Thyroid gland (tissue), 4 donors: ENCODE measurements at regions of chr15 and their contacts with region 1.

Region 1: DNA sequence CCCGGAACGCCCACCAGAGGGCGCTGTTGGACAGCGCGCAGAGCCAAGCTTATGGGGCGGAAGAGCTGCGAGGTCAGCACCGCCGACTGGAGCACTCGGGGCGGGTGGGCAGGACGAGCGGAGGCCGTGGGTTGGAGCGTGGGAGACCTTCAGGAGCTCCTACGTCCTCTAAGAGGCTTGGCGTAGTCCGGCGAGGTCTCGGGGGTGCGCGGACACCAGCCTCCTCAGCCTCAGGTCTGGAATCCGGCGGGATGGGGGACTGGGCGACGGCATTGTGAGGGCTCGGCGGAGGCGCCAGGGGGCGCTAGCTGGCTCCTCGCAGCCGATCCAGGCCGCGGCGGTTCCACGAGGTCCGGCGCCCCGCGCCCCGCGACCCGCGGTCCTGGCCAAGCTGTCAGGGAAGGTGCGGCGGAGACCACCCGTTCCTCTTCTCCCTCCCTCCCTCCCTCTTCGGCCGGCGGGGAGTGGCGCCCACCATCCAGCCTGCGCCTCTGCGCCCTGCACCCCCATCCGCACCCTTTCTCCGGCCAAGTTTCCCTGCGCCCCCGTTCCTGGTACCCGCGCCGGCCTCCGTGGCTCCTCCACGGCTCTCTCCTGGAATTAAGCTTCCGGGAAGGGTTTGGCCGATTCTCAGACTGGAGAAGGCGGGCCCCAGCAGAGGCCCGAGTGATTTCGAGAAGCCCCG is 24.3 kb upstream of the POLG start:
- DNase-seq: peak; percentile 58 to 69
- H3K4me3 ChIP-seq: peak overlapping the region in 1 of 3 donors; percentile 37
- H3K27ac ChIP-seq: no peak overlapping the region
- H3K4me1 ChIP-seq: peaks cover 7 to 16% of the 10 kb centered on the region in 2 donors
- H3K27me3 ChIP-seq: peaks cover 23% of the 10 kb centered on the region
- CTCF ChIP-seq: peak; percentile 92 to 99 (median 96)
- POLR2A ChIP-seq: no peak

Region 2: GRCh38 chr15:89087830-89088604 is 270.9 kb before region 1 on chr15 and contains the start of gene ABHD2:
- intact Hi-C with region 1: no loop called
- DNase-seq: peak; percentile 99
- H3K4me3 ChIP-seq: peak within 1 kb of the TSS; percentile 52 to 82 (median 78)
- H3K27ac ChIP-seq: peak within 1 kb of the TSS; percentile 23 to 86 (median 79)
- H3K4me1 ChIP-seq: peaks cover 16 to 22% of the 10 kb centered on the region in 2 donors
- H3K27me3 ChIP-seq: no peaks in the 10 kb centered on the region
- CTCF ChIP-seq: no peak
- POLR2A ChIP-seq: peak in 1 of 2 donors; percentile 76
- total RNA-seq, gene ABHD2: 52.0 to 74.4 (median 66.2) TPM

Region 3: DNA sequence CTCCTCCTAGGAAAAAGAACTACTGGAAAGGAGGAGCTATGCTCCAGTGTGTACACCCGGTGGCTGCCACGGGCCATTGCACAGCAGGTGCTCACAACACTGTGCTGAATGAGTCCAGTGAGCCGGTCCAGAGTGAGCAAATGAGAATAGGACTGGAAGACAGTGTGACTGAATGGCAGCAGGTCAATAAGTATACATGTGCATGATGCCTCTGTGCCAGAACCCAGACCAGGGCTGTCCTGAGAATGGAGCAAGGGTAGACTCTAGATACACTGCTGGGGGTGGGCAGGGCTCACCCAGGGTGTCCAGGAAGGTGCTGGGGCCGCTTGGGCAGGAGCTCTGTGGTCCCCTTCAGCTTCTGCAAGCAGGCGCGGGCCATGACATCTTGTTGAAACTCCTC is 32.6 kb before region 1 on chr15:
- intact Hi-C with region 1: loop called (anchors 2 kb)
- DNase-seq: peak; percentile 53 to 68
- H3K4me3 ChIP-seq: no peak overlapping the region
- H3K27ac ChIP-seq: no peak overlapping the region
- H3K4me1 ChIP-seq: peaks cover under 1 to 7% of the 10 kb centered on the region in 2 donors
- H3K27me3 ChIP-seq: no peaks in the 10 kb centered on the region
- CTCF ChIP-seq: no peak
- POLR2A ChIP-seq: no peak

Region 4: GRCh38 chr15:89416141-89416853 is 57.4 kb after region 1 on chr15:
- intact Hi-C with region 1: loop called (anchors 5 kb)
- DNase-seq: peak; percentile 34 to 35
- H3K4me3 ChIP-seq: no peak overlapping the region
- H3K27ac ChIP-seq: no peak overlapping the region
- H3K4me1 ChIP-seq: peaks cover 0 to 4% of the 10 kb centered on the region in 2 donors
- H3K27me3 ChIP-seq: peaks cover 7% of the 10 kb centered on the region
- CTCF ChIP-seq: peak in 5 of 6 experiments; percentile 22 to 61 (median 44)
- POLR2A ChIP-seq: no peak

Region 5: DNA sequence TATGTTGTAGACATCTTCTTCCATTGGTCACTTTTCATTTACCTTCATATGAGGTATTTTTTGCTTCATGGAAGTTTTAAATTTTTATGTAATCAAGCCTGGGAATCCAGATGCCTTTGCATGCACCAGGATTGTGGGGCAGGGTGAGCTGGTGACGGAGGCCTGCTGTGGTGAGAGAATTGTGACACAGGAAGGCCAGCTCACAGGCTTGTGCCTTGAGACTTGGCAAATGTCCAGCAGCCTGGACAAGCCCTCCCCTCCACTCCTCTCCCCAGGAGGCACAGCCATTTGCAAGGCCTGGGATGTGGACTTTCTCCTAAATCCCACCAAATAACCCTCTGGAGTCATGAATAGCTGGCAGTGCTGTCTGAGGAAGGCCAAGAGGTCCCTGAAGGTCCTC is 70.1 kb after region 1 on chr15:
- intact Hi-C with region 1: loop called (anchors 2 kb)
- DNase-seq: no peak
- H3K4me3 ChIP-seq: no peak overlapping the region
- H3K27ac ChIP-seq: no peak overlapping the region
- H3K4me1 ChIP-seq: peaks cover 0 to 8% of the 10 kb centered on the region in 2 donors
- H3K27me3 ChIP-seq: no peaks in the 10 kb centered on the region
- CTCF ChIP-seq: no peak
- POLR2A ChIP-seq: no peak

Region 6: DNA sequence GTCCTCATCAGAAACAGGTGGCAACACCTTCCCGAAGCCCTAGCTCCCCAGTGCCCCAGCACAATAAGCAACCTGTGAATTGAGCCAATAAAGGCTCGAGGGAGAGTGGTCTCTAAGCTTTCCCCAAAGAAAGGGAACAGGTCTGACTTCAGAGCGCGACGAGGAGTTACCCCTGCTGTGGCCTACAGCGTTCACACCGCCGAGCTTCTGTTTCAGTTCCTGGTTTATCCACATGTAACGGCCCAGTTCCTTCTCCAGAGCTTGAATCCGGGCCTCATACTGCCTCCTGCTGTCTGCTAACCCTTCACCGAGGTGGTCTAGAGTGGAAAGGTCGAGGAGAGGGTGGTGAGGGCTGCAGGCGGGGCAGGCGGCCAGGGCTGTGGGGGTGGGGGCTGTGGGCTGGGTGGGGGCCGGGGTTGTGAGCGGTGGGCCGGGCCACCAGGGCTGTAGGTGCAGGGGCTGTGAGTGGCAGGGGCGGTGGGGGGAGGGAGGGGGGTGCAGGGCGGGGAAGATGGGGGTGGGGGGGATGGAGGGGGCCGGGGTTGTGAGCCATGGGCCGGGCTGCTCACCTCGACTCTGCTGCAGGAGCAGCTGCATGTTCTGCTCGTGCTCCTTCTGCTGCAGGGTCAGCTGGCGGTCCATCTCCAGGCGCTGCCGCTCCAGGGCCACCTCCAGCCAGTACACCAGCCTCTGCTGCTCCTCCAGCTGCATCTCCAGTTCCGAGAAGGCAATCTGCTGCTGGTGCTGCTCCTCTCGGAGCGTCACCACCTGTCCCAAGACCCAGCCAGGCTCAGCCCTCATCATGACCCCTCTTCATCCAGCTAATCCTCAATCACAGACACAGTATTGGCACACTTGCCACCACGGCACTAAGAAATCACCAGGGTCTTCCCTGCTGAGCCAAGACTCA is 270.2 kb after region 1 on chr15:
- intact Hi-C with region 1: no loop called
- DNase-seq: no peak
- H3K4me3 ChIP-seq: no peak overlapping the region
- H3K27ac ChIP-seq: no peak overlapping the region
- H3K4me1 ChIP-seq: no peaks in the 10 kb centered on the region
- H3K27me3 ChIP-seq: no peaks in the 10 kb centered on the region
- CTCF ChIP-seq: no peak
- POLR2A ChIP-seq: no peak